Esophagus squamous epithelium (tissue), 5 donors: ENCODE measurements at regions of chr10 and their contacts with region 1.

Region 1: GRCh38 chr10:80699602-80700039 is 161.9 kb downstream of the SH2D4B start:
- DNase-seq: peak; percentile 10
- H3K4me3 ChIP-seq: no peak overlapping the region
- H3K27ac ChIP-seq: no peak overlapping the region
- H3K4me1 ChIP-seq: peaks cover 0 to 7% (median 0%) of the 10 kb centered on the region in 3 donors
- H3K27me3 ChIP-seq: no peaks in the 10 kb centered on the region
- CTCF ChIP-seq: peak; percentile 51 to 86 (median 73)
- POLR2A ChIP-seq: no peak

Region 2: DNA sequence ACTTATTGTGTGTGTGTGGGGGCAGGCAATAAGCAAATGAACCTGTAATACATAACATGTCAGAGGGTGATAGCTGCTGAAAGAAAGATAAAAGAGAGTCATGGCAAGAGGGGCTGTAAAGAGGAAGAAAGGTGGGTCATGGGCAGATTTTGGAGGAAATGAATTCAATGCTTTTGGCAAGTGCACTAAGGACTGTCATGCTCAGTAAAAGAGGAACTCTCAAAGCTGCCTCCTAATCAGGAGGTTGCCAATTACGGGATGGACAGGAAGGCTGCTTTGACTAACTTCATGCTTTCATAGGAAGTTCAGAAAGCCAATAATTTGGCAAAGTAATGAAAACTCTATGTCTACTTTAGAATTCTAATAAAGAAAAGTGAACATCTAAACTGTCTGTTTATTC is 239.3 kb after region 1 on chr10:
- intact Hi-C with region 1: no loop called
- DNase-seq: no peak
- H3K4me3 ChIP-seq: no peak overlapping the region
- H3K27ac ChIP-seq: no peak overlapping the region
- H3K4me1 ChIP-seq: peaks cover 0 to 6% (median 0%) of the 10 kb centered on the region in 3 donors
- H3K27me3 ChIP-seq: no peaks in the 10 kb centered on the region
- CTCF ChIP-seq: no peak
- POLR2A ChIP-seq: no peak

Region 3: DNA sequence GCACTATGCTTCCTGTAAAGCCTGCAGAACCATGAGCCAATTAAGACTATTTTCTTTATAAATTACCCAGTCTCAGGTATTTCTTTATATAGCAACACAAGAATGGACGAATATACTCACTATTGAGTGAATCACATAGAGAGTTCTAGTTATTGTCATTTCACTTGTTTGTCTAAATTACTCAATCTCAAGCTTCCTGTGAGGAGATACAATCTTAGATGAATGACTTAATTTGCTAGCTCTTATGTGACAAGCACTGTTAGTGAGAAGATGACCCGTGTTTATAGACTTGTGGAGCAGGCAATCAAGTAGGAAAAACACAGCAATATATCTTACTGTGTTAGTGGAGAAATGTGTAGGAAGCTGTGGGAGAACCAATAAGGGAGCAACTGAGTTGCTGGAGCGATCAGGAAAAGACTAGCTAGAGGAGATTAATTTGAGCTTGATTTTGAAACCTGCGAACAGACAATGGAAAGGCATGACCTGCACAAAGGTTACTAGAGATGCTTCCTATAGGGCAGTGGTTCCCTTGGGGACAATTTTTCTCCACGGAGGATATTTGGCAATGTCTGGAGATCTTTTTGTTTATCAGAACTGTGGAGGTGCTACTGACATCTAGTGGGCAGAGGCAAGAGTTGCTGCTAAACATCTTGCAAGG is 319.2 kb after region 1 on chr10:
- intact Hi-C with region 1: loop called (anchors 10 kb)
- DNase-seq: no peak
- H3K4me3 ChIP-seq: no peak overlapping the region
- H3K27ac ChIP-seq: no peak overlapping the region
- H3K4me1 ChIP-seq: peaks cover 0 to 12% (median 5%) of the 10 kb centered on the region in 3 donors
- H3K27me3 ChIP-seq: peaks cover 0 to 6% (median 0%) of the 10 kb centered on the region in 4 donors
- CTCF ChIP-seq: peak; percentile 22 to 70 (median 47)
- POLR2A ChIP-seq: no peak